ENCODE measurements at regions of chr2 and their contacts with region 1.

Region 1: DNA sequence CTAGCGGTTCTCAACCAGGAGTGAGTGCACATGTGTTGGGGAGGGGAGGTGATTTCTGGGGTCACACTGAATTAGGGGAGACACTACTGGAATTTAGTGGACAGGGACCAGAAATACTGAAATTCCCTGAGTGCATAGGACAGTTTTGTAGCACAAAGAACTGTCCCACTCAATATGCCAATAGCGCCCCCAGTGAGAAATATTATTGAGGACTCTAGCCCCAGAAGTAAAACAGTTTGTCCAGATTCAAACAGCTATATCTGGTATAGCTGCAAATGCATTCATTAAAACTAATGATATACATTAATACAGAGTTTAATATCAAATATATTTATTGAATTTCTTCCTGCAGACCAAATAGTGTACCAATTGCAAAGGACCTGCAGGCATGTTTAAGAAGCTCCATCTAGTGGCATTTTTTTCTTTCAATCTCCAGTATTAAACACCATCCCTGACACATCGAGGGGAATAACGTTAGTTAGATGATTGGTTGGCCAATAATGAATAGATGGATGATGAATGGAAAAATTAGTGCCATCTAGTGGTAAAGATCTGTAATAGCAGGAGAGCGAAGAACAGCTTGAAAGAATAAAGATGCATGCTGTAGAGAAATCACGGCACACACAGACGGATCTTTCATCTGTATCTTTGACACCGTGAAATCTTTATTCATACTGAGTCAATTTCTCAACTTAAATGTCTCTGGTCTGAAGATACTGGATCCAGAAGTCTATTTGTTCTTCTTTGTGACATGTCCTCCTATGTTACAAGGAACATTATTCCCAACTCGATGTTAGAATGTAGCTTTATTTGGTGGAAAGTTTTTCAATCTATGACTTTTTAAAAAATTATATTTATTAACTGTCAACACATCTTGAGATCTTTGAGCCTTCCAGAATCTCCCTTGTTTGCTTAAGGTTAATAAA is 62.5 kb downstream of the DHRS9 start:
- DNase-seq: peak; percentile 15
- ATAC-seq: peak; percentile 88
- H3K4me3 ChIP-seq: no peak overlapping the region
- H3K27ac ChIP-seq: no peak overlapping the region
- H3K4me1 ChIP-seq: no peaks in the 10 kb centered on the region
- H3K27me3 ChIP-seq: peaks cover 0 to 2% of the 10 kb centered on the region in 2 experiments; a peak in 1 of 4 replicates
- CTCF ChIP-seq: peak; percentile 63 to 76 (median 72); a peak in 5 of 6 replicates
- EP300 ChIP-seq: no peak
- POLR2A ChIP-seq: no peak
- RAD21 ChIP-seq: peak; percentile 52

Region 2: DNA sequence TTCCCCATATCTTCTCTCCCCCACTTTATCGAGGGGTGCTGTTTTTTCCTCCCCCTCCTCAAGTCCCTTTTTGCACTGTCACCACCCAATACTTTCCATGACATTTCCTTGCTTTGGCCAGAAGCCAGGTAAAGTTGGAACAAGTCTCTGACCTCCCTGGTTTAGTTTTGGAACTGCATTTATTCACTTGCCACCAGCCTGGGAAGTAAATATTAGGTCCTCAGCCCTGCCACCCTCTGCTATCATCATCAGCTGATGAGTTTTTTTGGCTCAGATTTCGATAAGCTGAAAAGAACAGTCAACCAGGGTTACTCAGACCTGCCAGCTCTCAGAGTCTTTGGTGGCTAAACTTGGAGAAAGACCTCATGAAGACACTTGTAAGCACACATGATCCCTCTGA is 15.5 kb before region 1 on chr2:
- CTCF ChIA-PET with region 1: interaction called, 84 read pairs
- POLR2A ChIA-PET with region 1: no interaction called
- RAD21 ChIA-PET with region 1: interaction called, 18 read pairs
- SMC1A ChIA-PET with region 1: interaction called, 3 read pairs
- in situ Hi-C with region 1: no loop called
- intact Hi-C with region 1: no loop called
- DNase-seq: no peak
- ATAC-seq: no peak
- H3K4me3 ChIP-seq: no peak overlapping the region
- H3K27ac ChIP-seq: no peak overlapping the region
- H3K4me1 ChIP-seq: no peaks in the 10 kb centered on the region
- H3K27me3 ChIP-seq: peaks cover 0 to 3% of the 10 kb centered on the region in 2 experiments; a peak in 2 of 4 replicates
- CTCF ChIP-seq: no peak
- EP300 ChIP-seq: no peak
- POLR2A ChIP-seq: no peak
- RAD21 ChIP-seq: no peak

Measured in GM12878 (cell line).